Cardiac septum (tissue), 1 donor: ENCODE measurements at regions of chr16 and their contacts with region 1.

Region 1: GRCh38 chr16:20956319-20956718 is 55.7 kb downstream of the LYRM1 start:
- DNase-seq: no peak

Region 2: DNA sequence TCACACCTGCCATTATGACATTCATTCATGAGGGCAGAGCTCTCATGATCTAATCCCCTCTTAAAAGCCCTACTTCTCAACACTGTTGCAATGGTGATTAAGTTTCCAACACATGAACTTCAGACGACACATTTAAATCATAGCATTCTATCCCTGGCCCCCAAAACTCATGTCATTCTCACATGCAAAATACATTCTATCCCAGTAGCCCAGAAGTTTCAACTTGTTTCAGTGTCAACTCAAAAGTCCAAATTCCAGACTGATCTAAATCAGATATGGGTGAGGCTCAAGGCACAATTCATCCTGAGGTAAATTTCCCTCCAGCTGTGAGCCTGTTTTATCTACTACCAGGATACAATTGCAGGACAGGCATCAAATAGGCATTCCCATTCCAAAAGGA is 30.6 kb before region 1 on chr16:
- intact Hi-C with region 1: loop called (anchors 2 kb)
- DNase-seq: no peak